ENCODE measurements at regions of chr2 and their contacts with region 1.

Region 1: DNA sequence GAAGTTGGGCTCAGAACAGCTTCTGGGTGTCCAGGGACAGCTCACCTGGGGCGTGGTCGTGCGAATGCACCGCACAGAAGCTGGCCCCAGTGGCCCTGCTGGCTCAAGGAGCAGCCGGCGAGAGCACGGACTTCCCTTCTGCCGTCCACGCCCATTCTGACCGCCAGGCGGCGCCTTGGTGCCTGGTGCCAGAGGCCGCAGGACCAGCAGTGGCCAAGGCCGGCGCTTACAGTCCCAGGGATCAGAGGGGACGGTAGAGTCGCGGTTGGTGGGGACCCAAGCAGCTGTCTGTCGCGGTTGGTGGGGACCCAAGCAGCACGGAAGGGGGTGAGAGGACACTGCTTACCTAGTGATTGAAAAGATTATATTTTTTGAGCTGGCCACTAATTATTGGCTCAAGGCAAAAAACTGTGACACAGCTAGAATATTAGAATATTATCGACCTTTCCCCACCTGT is 25.7 kb downstream of the NPPC start:
- DNase-seq: peak; percentile 77 to 96
- H3K4me3 ChIP-seq: no peak overlapping the region
- H3K4me1 ChIP-seq: peaks cover 8% of the 10 kb centered on the region
- H3K27me3 ChIP-seq: no peaks in the 10 kb centered on the region

Region 2: GRCh38 chr2:231961349-231962166 is 61.0 kb after region 1 on chr2 and contains the start of gene DIS3L2:
- in situ Hi-C with region 1: no loop called
- DNase-seq: peak; percentile 81 to 83
- H3K4me3 ChIP-seq: peak within 1 kb of the TSS; percentile 78
- H3K4me1 ChIP-seq: peaks cover 6% of the 10 kb centered on the region; the same call in 1 of the 2 replicates
- H3K27me3 ChIP-seq: no peaks in the 10 kb centered on the region

Region 3: GRCh38 chr2:232018181-232018580 is 117.7 kb after region 1 on chr2:
- in situ Hi-C with region 1: no loop called
- DNase-seq: no peak
- H3K4me3 ChIP-seq: no peak overlapping the region
- H3K4me1 ChIP-seq: peaks cover 4% of the 10 kb centered on the region; the same call in 1 of the 2 replicates
- H3K27me3 ChIP-seq: no peaks in the 10 kb centered on the region

Region 4: DNA sequence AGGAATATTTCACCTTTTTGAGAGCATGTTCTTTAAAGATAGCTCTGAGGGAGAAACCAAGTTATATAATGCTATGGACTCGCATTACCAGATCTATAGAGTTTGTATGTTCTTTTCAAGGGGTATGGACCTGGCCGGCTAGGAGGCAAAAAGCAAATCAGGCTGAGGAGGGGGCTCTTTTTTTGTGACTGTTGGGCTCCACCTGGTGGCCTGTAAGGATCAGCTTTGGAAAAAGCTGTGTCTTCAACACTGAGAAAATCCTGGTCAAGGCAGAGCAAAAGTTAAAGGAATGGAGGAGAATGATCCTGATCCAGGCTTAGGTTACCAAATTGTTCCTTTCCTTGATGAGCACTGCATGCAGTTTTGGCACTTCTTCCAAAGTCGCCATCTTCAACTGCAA is 241.5 kb after region 1 on chr2:
- in situ Hi-C with region 1: loop called (anchors 5 kb)
- DNase-seq: peak; percentile 51 to 62
- H3K4me3 ChIP-seq: no peak overlapping the region
- H3K4me1 ChIP-seq: no peaks in the 10 kb centered on the region
- H3K27me3 ChIP-seq: no peaks in the 10 kb centered on the region

Region 5: GRCh38 chr2:232327105-232328041 is 426.9 kb after region 1 on chr2:
- in situ Hi-C with region 1: loop called (anchors 5 kb)
- DNase-seq: peak; percentile 4 to 89
- H3K4me3 ChIP-seq: no peak overlapping the region
- H3K4me1 ChIP-seq: no peaks in the 10 kb centered on the region
- H3K27me3 ChIP-seq: no peaks in the 10 kb centered on the region

Region 6: GRCh38 chr2:232438951-232439757 is 538.6 kb after region 1 on chr2:
- in situ Hi-C with region 1: loop called (anchors 5 kb)
- DNase-seq: peak in 1 of 2 experiments; percentile 80
- H3K4me3 ChIP-seq: no peak overlapping the region
- H3K4me1 ChIP-seq: no peaks in the 10 kb centered on the region
- H3K27me3 ChIP-seq: no peaks in the 10 kb centered on the region

Region 7: DNA sequence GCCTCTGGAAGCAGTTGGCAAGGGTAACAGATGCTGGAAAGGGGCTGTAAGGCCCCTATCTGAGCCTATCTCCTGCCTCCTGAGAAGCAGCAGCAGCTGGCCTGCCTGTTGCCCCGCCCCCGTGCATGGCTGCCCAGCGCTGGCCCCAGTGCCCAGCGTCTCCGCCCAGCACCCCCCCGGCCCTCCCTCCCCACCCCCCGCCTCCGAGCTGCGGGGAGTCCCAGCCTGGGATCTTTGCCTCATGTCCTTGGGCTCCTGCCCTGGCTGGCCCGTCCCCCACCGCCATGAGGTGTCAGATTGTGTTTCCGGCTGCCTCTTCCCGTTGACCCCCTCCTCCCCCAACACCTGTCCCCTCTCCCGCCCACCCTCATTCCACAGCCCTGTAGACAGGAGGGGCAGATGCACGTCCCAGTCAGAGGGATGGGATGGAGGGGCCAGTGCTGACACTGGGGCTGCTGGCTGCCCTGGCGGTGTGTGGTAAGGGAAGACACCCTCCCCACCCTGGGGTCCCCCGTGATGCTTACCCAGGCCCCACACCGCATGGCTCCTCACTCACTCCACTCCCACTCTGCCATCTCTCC is 625.4 kb after region 1 on chr2 and contains the start of gene CHRND:
- in situ Hi-C with region 1: loop called (anchors 5 kb)
- DNase-seq: no peak
- H3K4me3 ChIP-seq: no peak within 1 kb of the TSS
- H3K4me1 ChIP-seq: no peaks in the 10 kb centered on the region
- H3K27me3 ChIP-seq: peaks cover 10% of the 10 kb centered on the region